Activated CD4-positive, alpha-beta memory T cell treated with anti-CD3 and anti-CD28 coated beads, Interleukin-2, amount 10 ng/mL, durations not matched to agents 7 days and 5 days (primary cell): ENCODE measurements at regions of chr7 and their contacts with region 1.

Region 1: DNA sequence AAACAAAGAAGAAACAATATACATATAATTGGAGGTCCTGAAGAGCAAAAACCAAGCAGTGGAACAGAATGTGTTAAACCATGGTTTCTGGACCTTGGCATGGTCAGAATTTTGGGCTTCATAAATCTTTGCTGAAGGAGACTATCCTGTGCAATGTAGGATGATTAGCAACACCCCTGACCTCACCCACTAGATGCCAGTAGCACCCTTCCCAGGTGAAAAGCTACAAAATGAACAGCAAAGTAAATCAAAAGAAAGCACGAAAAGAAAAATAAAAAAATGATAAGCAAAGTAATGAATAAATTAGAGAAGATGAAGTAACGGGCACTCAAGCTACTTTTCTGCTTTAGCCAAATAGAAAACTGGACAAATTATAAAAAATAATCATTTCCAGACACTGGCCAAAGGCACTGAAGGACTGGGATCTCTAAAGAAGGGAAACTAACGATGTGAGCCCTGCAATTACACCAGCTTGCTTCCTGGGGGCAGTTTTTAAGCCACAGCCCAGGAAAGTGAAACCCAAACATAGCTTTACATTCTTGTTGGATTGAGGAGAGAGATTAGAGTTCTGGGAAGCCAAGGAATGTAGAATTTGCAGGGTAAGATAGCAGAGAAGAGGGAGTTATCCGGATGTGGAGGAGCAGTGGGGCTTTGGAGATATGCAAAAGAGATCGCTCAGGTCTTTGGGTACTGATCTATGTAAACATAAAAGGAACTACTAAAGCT is 19.4 kb upstream of the ZPBP start:
- DNase-seq: no peak
- H3K4me3 Mint-ChIP-seq: no peak overlapping the region
- H3K27ac Mint-ChIP-seq: no peak overlapping the region
- H3K4me1 Mint-ChIP-seq: peaks cover 1% of the 10 kb centered on the region
- H3K27me3 Mint-ChIP-seq: peaks cover 45% of the 10 kb centered on the region

Region 2: GRCh38 chr7:49927631-49928030 is 184.8 kb before region 1 on chr7:
- CTCF ChIA-PET with region 1: no interaction called
- POLR2A ChIA-PET with region 1: no interaction called
- DNase-seq: no peak
- H3K4me3 Mint-ChIP-seq: no peak overlapping the region
- H3K27ac Mint-ChIP-seq: no peak overlapping the region
- H3K4me1 Mint-ChIP-seq: no peaks in the 10 kb centered on the region
- H3K27me3 Mint-ChIP-seq: no peaks in the 10 kb centered on the region

Region 3: GRCh38 chr7:50092579-50093491 is 19.6 kb before region 1 on chr7 and contains the start of gene ZPBP:
- CTCF ChIA-PET with region 1: interaction called, 13 read pairs
- POLR2A ChIA-PET with region 1: no interaction called
- DNase-seq: peak; percentile 43
- H3K4me3 Mint-ChIP-seq: peak within 1 kb of the TSS; percentile 73
- H3K27ac Mint-ChIP-seq: peak within 1 kb of the TSS; percentile 47
- H3K4me1 Mint-ChIP-seq: peaks cover 4% of the 10 kb centered on the region
- H3K27me3 Mint-ChIP-seq: peaks cover 19% of the 10 kb centered on the region
- total RNA-seq, gene ZPBP: not detected